AG04449 (cell line): ENCODE measurements at regions of chr19 and their contacts with region 1.

Region 1: DNA sequence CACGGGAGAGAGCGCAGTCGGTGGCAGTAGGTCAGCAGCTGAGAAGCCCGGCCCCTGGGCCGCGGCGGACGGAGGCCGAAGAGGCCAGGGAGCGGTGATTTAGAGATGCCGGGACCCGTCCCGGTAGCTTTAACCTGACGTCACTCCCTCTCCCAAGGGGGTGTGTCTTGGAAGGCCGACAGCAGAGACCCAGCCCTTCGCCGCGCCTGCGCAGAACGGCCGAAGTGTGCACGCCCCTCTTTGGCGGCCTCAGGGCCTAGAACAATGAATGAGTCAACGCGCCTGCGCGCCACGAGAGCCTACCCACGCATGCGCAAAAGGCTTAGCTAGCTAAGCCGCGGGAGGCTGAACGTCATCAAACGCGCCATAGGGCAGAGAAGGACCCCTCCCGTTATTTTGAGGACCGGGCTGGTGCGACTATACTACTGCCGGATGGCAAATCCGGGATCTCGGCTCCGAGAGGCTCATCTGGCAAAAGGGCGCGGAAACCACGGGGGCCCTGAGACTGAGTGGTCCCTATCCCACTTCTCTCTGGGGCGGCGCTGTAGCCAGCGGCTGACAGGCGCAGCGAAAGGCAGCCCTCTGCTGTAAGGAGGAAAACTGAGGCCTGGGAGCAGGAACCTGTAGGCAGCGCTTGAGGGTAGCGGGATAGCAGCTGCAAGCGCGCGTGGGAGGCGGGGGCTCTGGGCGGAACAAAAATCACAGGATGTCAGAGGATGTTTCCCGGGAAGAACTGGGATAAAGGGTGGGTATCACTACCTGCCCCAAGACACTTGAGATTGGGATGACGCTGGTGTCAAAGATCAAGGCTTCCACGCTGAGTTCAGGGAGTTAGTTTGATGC is at the starts of genes IRGQ and ZNF576:
- DNase-seq: peak; percentile 90
- H3K4me3 ChIP-seq: peak within 1 kb of the TSS; percentile 79
- CTCF ChIP-seq: no peak

Region 2: DNA sequence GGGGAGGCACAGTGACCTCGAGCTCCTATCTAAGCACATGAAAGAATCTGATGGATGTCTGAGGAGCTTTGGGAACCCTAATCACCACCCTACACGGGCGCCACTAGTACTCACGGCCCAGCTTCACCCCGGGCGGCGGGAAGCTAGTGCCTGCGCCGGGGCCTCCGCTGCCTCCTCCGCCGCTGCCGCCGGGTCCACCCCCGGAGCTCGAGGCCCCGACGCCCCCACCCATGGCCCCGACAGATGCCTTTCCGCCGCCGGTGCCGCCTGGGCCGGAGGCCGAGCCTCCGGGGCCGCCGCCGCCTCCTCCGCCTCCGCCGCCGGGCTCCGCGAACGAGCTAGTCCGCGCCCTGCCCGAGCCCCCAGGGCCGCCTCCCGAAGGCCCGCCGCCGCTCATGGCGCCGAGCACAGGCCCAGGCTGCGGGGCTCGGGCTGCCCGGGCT is 1354.1 kb before region 1 on chr19:
- CTCF ChIA-PET with region 1: no interaction called
- POLR2A ChIA-PET with region 1: no interaction called
- DNase-seq: no peak
- H3K4me3 ChIP-seq: peak overlapping the region; percentile 86
- CTCF ChIP-seq: no peak

Region 3: DNA sequence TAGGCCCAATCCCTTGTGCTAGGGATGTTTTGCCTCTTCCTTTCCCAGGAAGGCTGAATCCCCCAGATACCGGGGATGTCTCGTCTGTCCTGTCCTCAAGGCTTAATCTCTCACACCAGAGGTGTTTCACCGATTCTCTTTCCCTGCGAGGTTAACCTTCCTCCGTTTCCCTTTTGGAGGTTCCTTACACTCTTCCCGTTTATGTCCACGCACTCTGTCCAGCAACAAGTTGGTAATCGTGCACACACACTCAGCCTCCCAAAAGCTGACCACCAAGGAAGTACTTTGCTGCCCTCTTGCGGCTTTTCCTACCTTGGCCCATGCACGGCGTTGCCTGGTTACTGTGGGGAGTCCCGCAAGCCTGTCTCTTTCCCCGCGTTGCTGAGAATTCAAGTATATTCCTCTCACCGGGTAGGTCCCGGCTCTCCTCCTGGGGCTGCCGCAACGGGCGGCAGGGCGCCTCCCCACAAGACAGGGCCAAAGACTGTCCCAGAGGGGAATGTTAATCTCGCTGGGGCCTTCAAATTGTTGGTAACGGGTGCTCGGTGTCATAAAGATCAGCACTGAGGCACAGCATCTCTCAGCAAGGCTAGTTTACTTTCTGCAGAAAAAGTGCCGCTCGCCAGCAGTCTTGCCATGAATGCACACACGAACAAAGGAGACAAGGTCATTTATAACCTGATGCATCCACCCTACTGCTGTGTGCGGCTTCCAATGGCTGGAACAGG is 279.5 kb before region 1 on chr19:
- CTCF ChIA-PET with region 1: no interaction called
- POLR2A ChIA-PET with region 1: no interaction called
- DNase-seq: no peak
- H3K4me3 ChIP-seq: no peak overlapping the region
- CTCF ChIP-seq: peak; percentile 44

Region 4: DNA sequence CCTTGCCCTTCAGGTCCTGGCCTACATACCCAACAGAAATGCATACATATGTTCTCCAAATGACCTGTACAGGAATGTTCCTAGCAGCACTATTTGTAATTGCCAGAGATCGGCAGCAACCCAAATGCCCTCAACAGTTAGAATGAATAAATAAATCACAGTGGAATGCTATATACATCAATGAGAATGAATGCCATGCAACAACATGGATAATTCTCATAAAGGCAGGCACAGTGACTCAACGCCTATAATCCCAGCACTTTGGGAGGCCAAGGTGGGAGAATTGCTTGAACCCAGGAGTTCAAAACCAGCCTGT is 162.9 kb before region 1 on chr19:
- CTCF ChIA-PET with region 1: interaction called, 11 read pairs
- POLR2A ChIA-PET with region 1: no interaction called
- DNase-seq: no peak
- H3K4me3 ChIP-seq: no peak overlapping the region
- CTCF ChIP-seq: no peak

Region 5: DNA sequence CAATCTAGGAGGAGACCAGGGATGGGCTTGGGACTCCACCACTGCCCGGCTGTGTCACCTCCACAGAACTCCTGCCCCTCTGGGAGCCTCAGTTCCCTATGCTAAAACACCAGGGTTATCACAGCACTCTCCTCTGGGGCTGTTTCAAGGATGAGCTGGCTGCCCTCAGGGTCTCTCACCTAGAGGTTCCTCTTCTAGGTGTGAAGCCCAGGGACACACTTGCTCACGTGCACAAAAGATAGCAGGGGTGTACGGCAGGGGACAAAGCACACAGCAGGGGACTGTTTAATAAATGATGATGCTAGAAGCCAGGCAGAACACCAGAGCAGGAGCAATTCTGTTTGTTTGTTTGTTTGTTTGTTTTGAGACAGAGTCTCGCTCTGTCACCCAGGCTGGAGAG is 114.0 kb before region 1 on chr19:
- CTCF ChIA-PET with region 1: no interaction called
- POLR2A ChIA-PET with region 1: no interaction called
- DNase-seq: no peak
- H3K4me3 ChIP-seq: no peak overlapping the region
- CTCF ChIP-seq: no peak

Region 6: DNA sequence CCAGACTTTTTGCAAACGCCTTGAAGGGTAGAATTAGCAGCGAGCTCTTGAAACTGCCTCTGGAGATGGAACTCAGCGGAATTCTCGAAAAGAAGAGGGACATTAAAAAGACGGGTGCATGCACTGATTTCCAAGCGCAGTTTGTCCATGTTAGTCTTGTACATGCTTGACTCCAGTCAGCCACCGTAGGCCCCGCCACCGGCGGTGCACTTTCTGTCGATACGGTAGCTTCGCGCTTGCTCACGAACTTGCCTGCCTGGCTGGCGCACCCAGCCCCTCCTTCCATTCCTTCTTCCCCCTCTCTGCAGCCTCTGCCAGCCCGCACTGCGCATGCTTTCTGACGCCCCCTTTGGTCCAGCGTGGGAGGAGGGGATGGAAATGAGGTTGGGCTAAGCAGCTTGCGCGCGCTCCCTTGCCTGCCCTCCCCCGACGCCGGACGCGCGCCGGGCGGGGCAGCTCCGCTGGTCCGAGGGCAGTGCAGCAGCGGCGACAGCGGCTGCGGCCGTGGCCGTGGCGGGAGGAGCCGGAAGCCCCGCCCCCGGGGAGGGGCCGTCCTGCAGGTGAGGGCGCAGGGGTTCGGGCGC is 63.2 kb before region 1 on chr19 and contains the start of gene ZNF575:
- CTCF ChIA-PET with region 1: interaction called, 63 read pairs
- POLR2A ChIA-PET with region 1: interaction called, 3 read pairs
- DNase-seq: peak; percentile 79
- H3K4me3 ChIP-seq: peak within 1 kb of the TSS; percentile 66
- CTCF ChIP-seq: no peak

Region 7: GRCh38 chr19:43575156-43575950 is 20.9 kb before region 1 on chr19 and contains the starts of genes PINLYP and XRCC1:
- CTCF ChIA-PET with region 1: interaction called, 68 read pairs
- POLR2A ChIA-PET with region 1: interaction called, 4 read pairs
- DNase-seq: peak; percentile 80
- H3K4me3 ChIP-seq: peak within 1 kb of the TSS; percentile 92
- CTCF ChIP-seq: no peak

Region 8: DNA sequence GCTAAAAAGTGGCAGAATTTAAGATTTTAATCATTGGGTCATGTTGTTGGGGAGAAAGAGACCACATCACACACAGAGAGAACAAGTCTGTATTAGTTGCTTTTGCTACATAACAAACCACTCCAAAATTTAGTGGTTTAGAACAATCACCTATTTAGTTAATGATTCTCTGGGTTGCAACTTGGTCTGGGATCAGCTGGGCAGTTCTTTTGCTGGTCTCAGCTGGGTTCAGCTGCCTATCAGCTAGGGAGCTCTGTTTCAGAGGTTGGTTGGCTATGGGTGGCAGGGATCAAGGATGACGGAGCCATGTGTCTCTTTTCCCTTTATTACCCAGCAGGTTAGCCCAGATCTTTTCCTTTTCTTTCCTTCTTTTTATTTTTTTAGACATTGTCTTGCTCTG is 11.7 kb before region 1 on chr19:
- CTCF ChIA-PET with region 1: interaction called, 68 read pairs
- POLR2A ChIA-PET with region 1: no interaction called
- DNase-seq: no peak
- H3K4me3 ChIP-seq: no peak overlapping the region
- CTCF ChIP-seq: no peak

Region 9: GRCh38 chr19:43777163-43777700 is 181.0 kb after region 1 on chr19:
- CTCF ChIA-PET with region 1: no interaction called
- POLR2A ChIA-PET with region 1: no interaction called
- DNase-seq: no peak
- H3K4me3 ChIP-seq: no peak overlapping the region
- CTCF ChIP-seq: no peak